Right lobe of liver (tissue), 6 donors: ENCODE measurements at regions of chr20 and their contacts with region 1.

Region 1: GRCh38 chr20:31842471-31843157 is 2.8 kb downstream of the FOXS1 start:
- DNase-seq: no peak
- ATAC-seq: peak; percentile 29 to 35 (median 30)
- H3K4me3 ChIP-seq: no peak overlapping the region
- H3K27ac ChIP-seq: no peak overlapping the region
- H3K4me1 ChIP-seq: no peaks in the 10 kb centered on the region
- H3K27me3 ChIP-seq: no peaks in the 10 kb centered on the region
- CTCF ChIP-seq: no peak
- POLR2A ChIP-seq: no peak

Region 2: DNA sequence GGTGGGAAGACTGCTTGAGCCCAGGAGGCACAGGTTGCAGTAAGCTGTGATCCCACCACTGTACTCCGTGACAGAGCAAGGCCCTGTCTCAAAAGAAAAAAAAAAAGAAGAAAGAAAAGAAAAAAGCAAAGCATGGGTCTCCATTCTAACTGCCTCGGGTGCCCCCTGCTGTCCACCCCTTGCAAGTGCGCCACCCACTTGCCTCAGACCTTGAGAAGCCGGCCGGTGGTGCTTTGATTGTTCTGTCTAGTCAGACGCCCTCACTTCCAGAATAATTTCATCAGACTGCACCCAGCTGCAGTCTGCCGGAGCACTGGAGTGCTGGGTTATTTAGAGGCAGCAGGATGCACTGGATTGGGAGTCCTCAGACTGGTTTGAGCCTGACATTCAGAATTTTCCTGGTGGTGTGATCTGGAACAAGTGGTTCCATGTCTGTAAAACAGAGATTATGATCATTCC is 249.3 kb after region 1 on chr20:
- intact Hi-C with region 1: loop called in 1 of 2 experiments (anchors 10 kb)
- DNase-seq: peak; percentile 74 to 82 (median 76)
- ATAC-seq: peak; percentile 89 to 95 (median 92)
- H3K4me3 ChIP-seq: no peak overlapping the region
- H3K27ac ChIP-seq: no peak overlapping the region
- H3K4me1 ChIP-seq: no peaks in the 10 kb centered on the region
- H3K27me3 ChIP-seq: no peaks in the 10 kb centered on the region
- CTCF ChIP-seq: peak; percentile 61 to 96 (median 94)
- POLR2A ChIP-seq: no peak